Right ventricle myocardium inferior (tissue), 1 donor: ENCODE measurements at regions of chr21 and their contacts with region 1.

Region 1: GRCh38 chr21:46661627-46662366 is 26.3 kb downstream of the PRMT2 start:
- DNase-seq: peak; percentile 59
- ATAC-seq: peak; percentile 22

Region 2: DNA sequence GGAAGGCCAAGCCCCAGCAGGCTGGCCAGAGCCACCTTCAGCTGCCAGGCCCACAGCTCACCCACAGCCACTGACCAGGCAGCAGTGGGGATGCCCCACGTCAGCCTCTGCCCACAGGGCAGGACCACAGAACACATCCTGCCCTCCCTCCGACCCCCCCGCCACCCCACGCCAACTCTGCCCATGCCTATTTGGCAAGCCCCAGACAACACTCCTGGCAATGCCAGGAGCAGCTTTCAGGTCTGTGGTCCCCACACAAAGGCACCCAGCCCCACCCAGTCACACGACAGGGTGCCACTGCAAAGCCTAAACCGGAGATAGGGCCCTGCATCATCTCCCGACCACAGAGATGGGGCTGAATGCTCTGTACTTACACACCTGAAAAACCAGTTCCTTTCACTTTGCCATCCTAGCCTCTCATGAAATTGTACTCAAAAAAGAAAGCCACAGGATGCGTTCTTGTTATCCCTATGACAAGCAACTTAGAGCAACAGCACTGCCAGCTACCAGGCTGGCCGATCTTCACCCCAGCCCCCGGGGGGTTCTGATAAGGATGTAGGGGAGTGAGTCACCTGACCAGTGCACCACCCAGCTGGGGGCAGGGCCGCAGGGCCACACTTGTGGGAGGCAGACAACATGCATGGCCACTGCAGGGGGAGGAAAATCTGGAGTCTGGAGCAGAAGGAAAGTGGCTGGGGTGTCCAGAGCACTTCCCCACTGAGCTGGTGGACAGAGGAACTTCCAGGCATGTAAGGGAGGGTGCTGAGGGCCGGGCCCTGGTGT is 1896.4 kb before region 1 on chr21:
- intact Hi-C with region 1: no loop called
- DNase-seq: no peak
- ATAC-seq: no peak

Region 3: GRCh38 chr21:46594276-46594675 is 67.5 kb before region 1 on chr21:
- intact Hi-C with region 1: loop called (anchors 2 kb)
- DNase-seq: no peak
- ATAC-seq: no peak